Activated B cell treated with CpG ODN at 0.5 μM for 24 hours (primary cell): ENCODE measurements at regions of chr19 and their contacts with region 1.

Region 1: DNA sequence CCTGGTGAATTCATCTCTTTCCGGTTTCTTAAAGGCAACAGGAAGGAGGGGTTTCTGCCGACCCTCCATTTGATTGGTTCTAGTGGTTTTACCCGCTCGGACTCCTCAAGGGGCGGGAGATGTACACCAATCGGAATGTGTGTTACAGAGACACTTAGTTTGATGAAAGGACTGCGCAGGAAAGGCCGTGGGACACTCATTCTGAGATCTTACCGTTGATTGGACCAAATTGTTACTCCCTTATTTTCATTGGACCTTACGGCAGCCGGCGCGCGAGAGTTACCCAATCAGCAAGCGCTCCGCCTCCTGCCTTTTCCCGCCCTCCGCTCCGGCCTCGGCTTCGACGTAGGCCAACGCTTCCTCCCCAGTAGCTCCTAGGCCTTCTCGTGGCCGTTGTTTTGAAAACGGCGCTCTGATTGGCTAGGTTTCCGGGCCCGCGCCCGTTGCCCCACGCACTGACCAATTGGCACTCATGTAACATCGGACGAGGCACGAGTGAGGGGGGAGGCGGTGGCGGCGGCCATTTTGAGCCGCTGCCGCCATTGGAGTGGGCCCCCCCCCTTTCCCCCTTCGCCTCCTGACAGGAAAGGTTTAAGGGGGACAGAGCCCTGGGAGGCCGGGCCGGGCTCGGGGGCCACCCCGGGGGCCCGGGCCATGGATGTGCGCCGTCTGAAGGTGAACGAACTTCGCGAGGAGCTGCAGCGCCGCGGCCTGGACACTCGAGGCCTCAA is at the start of gene HNRNPUL1:
- DNase-seq: peak; percentile 98
- ATAC-seq: peak; percentile 77
- H3K4me3 Mint-ChIP-seq: peak within 1 kb of the TSS; percentile 96
- H3K27ac Mint-ChIP-seq: peak within 1 kb of the TSS; percentile 99
- H3K4me1 Mint-ChIP-seq: peaks cover 48% of the 10 kb centered on the region
- H3K27me3 Mint-ChIP-seq: no peaks in the 10 kb centered on the region
- CTCF ChIP-seq: no peak
- total RNA-seq, gene HNRNPUL1: 235 and 244 TPM in 2 replicates

Region 2: DNA sequence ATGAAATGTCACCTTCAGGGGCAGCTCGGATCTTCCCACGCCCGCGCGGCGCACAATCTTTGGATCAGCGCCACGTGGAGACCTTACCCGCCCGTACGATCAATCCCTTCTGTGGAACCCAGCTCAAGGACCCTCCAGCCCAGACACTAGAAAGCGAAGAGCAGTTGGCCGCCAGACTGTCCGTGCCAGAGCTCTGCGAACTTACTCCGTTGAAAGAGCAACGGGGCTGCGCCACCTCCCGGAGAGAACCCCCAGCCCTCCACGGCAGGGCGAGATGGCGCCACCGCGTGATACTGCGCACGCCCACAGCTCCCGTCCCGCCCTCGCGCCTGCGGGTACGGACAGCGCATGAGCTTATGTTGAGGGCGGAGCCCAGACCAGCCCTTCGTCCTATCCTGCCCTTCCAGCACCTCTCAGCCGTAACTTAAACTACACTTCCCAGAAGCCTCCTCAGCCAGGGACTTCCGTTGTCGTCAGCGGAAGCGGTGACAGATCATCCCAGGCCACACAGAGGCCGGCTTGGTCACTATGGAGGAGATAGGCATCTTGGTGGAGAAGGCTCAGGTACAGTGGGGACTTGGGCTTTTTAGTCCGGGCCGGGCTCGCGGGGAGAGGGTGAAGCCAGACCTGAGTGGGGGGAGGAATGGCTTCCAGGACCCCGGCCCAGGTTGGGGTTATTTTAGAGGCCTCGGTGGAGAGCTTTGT is 1293.2 kb before region 1 on chr19 and contains the start of gene PSMC4:
- CTCF ChIA-PET with region 1: no interaction called
- POLR2A ChIA-PET with region 1: interaction called, 14 read pairs
- intact Hi-C with region 1: no loop called
- DNase-seq: peak; percentile 98
- ATAC-seq: peak; percentile 96
- H3K4me3 Mint-ChIP-seq: peak within 1 kb of the TSS; percentile 98
- H3K27ac Mint-ChIP-seq: peak within 1 kb of the TSS; percentile 98
- H3K4me1 Mint-ChIP-seq: peaks cover 39% of the 10 kb centered on the region
- H3K27me3 Mint-ChIP-seq: no peaks in the 10 kb centered on the region
- CTCF ChIP-seq: peak; percentile 21
- total RNA-seq, gene PSMC4: 109 and 115 TPM in 2 replicates

Region 3: GRCh38 chr19:40750059-40750873 is 513.7 kb before region 1 on chr19 and contains the start of gene ACTMAP:
- CTCF ChIA-PET with region 1: no interaction called
- POLR2A ChIA-PET with region 1: interaction called, 11 read pairs
- intact Hi-C with region 1: no loop called
- DNase-seq: peak; percentile 97
- ATAC-seq: peak; percentile 88
- H3K4me3 Mint-ChIP-seq: peak within 1 kb of the TSS; percentile 97
- H3K27ac Mint-ChIP-seq: peak within 1 kb of the TSS; percentile 96
- H3K4me1 Mint-ChIP-seq: peaks cover 49% of the 10 kb centered on the region
- H3K27me3 Mint-ChIP-seq: no peaks in the 10 kb centered on the region
- CTCF ChIP-seq: no peak
- total RNA-seq, gene ACTMAP: 8.5 and 12.7 TPM in 2 replicates

Region 4: GRCh38 chr19:41123716-41124294 is 140.2 kb before region 1 on chr19:
- CTCF ChIA-PET with region 1: no interaction called
- POLR2A ChIA-PET with region 1: interaction called, 5 read pairs
- intact Hi-C with region 1: loop called (anchors 2 kb)
- DNase-seq: no peak
- ATAC-seq: no peak
- H3K4me3 Mint-ChIP-seq: no peak overlapping the region
- H3K27ac Mint-ChIP-seq: no peak overlapping the region
- H3K4me1 Mint-ChIP-seq: peaks cover 16% of the 10 kb centered on the region
- H3K27me3 Mint-ChIP-seq: peaks cover 19% of the 10 kb centered on the region
- CTCF ChIP-seq: no peak

Region 5: GRCh38 chr19:41327576-41328156 is 63.7 kb after region 1 on chr19:
- CTCF ChIA-PET with region 1: no interaction called
- POLR2A ChIA-PET with region 1: interaction called, 28 read pairs
- intact Hi-C with region 1: loop called (anchors 1 kb)
- DNase-seq: peak; percentile 77
- ATAC-seq: peak; percentile 71
- H3K4me3 Mint-ChIP-seq: peak overlapping the region; percentile 77
- H3K27ac Mint-ChIP-seq: peak overlapping the region; percentile 91
- H3K4me1 Mint-ChIP-seq: peaks cover 70% of the 10 kb centered on the region
- H3K27me3 Mint-ChIP-seq: no peaks in the 10 kb centered on the region
- CTCF ChIP-seq: no peak

Region 6: GRCh38 chr19:41439441-41440222 is 175.6 kb after region 1 on chr19 and contains the start of gene DMAC2:
- CTCF ChIA-PET with region 1: no interaction called
- POLR2A ChIA-PET with region 1: interaction called, 9 read pairs
- intact Hi-C with region 1: loop called (anchors 2 kb)
- DNase-seq: peak; percentile 78
- ATAC-seq: peak; percentile 97
- H3K4me3 Mint-ChIP-seq: no peak within 1 kb of the TSS
- H3K27ac Mint-ChIP-seq: no peak within 1 kb of the TSS
- H3K4me1 Mint-ChIP-seq: peaks cover 7% of the 10 kb centered on the region
- H3K27me3 Mint-ChIP-seq: no peaks in the 10 kb centered on the region
- CTCF ChIP-seq: no peak
- total RNA-seq, gene DMAC2: 38.2 and 45.7 TPM in 2 replicates